GM12878 (cell line): ENCODE measurements at regions of chr9 and their contacts with region 1.

Region 1: DNA sequence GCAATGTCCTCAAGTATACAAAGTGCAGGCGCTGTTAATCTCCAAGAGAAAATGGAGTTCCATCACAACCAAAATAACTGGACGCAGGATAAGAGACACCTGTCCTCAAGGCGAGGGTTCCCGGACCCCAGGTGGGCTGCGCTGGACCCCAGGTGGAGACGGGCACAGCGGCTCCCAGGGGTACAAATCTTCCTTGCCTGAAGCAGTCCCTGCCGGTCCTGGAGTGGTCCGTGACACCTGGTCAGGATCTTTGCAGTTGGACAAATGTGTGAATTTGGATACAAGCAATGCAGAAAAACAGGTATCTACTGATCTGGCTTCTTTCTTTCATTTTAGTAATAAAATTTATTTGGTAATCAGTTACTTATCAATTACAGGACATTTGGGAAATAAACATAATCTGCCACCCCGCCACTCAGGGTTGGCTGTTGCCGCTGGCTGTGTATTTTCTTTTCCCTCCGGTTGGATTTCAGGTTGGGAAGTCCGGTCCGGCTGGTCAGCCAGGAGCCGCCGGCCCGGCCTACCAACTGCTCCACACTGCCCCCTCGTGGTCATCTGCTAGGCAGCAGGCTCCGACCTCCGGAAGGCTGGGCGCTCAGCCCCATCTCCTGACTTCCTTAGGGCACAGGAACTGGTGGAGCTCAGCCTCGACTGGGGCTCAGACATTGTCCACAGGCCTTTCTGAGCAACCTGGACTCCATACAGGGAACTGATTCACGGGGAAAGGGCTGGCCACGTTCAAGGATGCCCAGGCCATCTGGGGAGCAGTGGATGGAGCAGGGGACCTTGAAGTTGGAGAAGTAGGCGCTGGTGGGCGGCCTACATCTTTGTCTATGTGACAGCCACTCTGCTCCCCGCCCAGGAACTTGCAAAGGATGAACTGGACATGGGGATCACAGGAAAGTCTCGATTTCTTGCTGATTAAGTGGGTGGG is 43.4 kb downstream of the NXNL2 start:
- DNase-seq: peak; percentile 7
- ATAC-seq: peak; percentile 96
- H3K4me3 ChIP-seq: no peak overlapping the region
- H3K27ac ChIP-seq: no peak overlapping the region
- H3K4me1 ChIP-seq: no peaks in the 10 kb centered on the region
- H3K27me3 ChIP-seq: no peaks in the 10 kb centered on the region
- CTCF ChIP-seq: peak; percentile 91 to 95 (median 94); a peak in 5 of 6 replicates
- EP300 ChIP-seq: no peak
- POLR2A ChIP-seq: no peak
- RAD21 ChIP-seq: peak; percentile 80

Region 2: DNA sequence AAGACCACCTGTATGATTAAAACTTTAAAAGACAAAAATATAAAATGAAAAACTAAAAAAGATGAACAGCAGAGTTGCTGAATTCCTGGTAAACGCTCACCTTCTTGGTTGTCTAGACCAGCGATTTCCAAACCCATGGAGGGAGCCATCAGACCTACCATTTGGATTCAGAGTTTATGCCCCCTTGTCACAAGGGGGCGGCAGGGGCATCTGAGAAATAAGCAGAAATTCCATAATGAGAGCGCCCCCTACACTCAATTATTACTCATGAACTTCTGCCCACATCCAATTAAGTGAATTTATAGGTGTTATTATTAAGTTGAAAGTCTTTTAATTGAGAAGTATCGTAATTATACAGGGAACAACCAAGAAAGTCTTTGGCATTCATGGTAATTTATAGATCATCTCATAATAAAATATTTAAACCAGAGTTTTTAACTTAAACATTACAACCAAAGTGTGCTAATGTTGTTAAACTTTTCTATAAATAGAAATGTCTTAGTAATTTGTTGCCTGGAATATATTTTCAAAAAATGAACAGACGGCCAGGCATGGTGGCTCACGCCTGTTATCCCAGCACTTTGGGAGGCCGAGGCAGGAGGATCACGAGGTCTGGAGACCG is 404.9 kb before region 1 on chr9:
- CTCF ChIA-PET with region 1: interaction called, 6 read pairs
- POLR2A ChIA-PET with region 1: no interaction called
- RAD21 ChIA-PET with region 1: interaction called, 3 read pairs
- SMC1A ChIA-PET with region 1: interaction called, 3 read pairs
- in situ Hi-C with region 1: no loop called
- intact Hi-C with region 1: loop called (anchors 1 kb)
- DNase-seq: no peak
- ATAC-seq: peak; percentile 52
- H3K4me3 ChIP-seq: no peak overlapping the region
- H3K27ac ChIP-seq: no peak overlapping the region
- H3K4me1 ChIP-seq: no peaks in the 10 kb centered on the region
- H3K27me3 ChIP-seq: no peaks in the 10 kb centered on the region
- CTCF ChIP-seq: peak; percentile 32 to 72 (median 42); a peak in 5 of 6 replicates
- EP300 ChIP-seq: no peak
- POLR2A ChIP-seq: no peak
- RAD21 ChIP-seq: peak; percentile 56

Region 3: DNA sequence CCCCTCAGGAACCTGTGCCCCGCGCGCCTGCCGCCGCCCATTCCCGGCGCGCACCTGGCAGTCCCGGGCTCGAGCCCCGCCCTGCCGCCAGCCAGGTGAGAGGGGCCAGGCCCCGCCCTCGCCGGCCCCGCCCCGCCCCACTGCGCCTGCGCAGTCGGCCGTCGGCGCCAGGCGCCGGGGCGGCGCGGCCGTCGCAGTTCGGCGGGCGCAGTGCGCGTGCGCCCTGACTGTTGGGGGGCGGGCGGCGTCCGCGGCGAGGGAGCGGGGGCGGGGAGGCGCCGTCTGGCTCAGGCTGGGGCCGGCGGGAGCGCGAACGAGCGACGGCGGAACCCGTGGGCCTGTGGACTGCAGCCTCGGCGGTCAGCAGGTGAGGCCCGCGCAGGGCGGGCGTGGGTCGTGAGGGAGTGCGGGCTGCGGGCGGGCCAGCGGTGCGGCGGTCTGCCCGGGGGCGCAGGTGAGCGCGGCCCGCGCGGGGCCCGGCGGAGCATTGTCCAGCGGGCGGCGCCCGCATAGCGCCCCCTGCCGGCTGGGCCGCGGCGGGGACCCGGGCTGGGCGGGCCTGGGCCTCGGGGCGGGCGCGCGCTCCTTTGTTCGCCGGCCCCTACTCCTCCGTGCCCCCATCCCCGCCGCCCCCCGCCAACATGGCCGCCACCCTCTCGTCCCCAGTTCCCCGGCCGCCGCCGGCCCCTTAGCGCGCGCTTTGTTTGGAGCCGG is 190.1 kb before region 1 on chr9 and contains the start of gene SPIN1:
- CTCF ChIA-PET with region 1: interaction called, 3 read pairs
- POLR2A ChIA-PET with region 1: interaction called, 5 read pairs
- RAD21 ChIA-PET with region 1: no interaction called
- SMC1A ChIA-PET with region 1: no interaction called
- in situ Hi-C with region 1: no loop called
- intact Hi-C with region 1: loop called (anchors 10 kb)
- DNase-seq: no peak
- ATAC-seq: peak; percentile 92
- H3K4me3 ChIP-seq: peak within 1 kb of the TSS; percentile 98
- H3K27ac ChIP-seq: peak within 1 kb of the TSS; percentile 56; the same call in 1 of the 2 replicates
- H3K4me1 ChIP-seq: peaks cover 25% of the 10 kb centered on the region
- H3K27me3 ChIP-seq: no peaks in the 10 kb centered on the region
- CTCF ChIP-seq: peak; percentile 16 to 54 (median 45); a peak in 3 of 6 replicates
- EP300 ChIP-seq: no peak
- POLR2A ChIP-seq: peak; percentile 75
- RAD21 ChIP-seq: peak; percentile 46; the same call in 1 of the 2 replicates
- polyA plus RNA-seq, gene SPIN1: 6.6 to 8.1 TPM